MCF 10A (cell line): ENCODE measurements at regions of chr2 and their contacts with region 1.

Region 1: GRCh38 chr2:237572021-237572741 is 5.8 kb downstream of the PRLH start:
- DNase-seq: peak; percentile 82
- H3K4me3 Mint-ChIP-seq: peak overlapping the region; percentile 35
- H3K27ac Mint-ChIP-seq: peak overlapping the region; percentile 16
- H3K4me1 Mint-ChIP-seq: peaks cover 17% of the 10 kb centered on the region
- H3K27me3 Mint-ChIP-seq: no peaks in the 10 kb centered on the region
- CTCF ChIP-seq: peak; percentile 97

Region 2: GRCh38 chr2:237092920-237093781 is 479.0 kb before region 1 on chr2:
- CTCF ChIA-PET with region 1: interaction called, 7 read pairs
- POLR2A ChIA-PET with region 1: interaction called, 4 read pairs
- intact Hi-C with region 1: loop called (anchors 1 kb)
- DNase-seq: peak; percentile 86
- H3K4me3 Mint-ChIP-seq: peak overlapping the region; percentile 99
- H3K27ac Mint-ChIP-seq: peak overlapping the region; percentile 94
- H3K4me1 Mint-ChIP-seq: peaks cover 62% of the 10 kb centered on the region
- H3K27me3 Mint-ChIP-seq: no peaks in the 10 kb centered on the region
- CTCF ChIP-seq: peak; percentile 72

Region 3: GRCh38 chr2:237413777-237414661 is 158.2 kb before region 1 on chr2 and contains the start of gene COL6A3:
- CTCF ChIA-PET with region 1: interaction called, 6 read pairs
- POLR2A ChIA-PET with region 1: interaction called, 5 read pairs
- intact Hi-C with region 1: loop called (anchors 5 kb)
- DNase-seq: no peak
- H3K4me3 Mint-ChIP-seq: no peak within 1 kb of the TSS
- H3K27ac Mint-ChIP-seq: no peak within 1 kb of the TSS
- H3K4me1 Mint-ChIP-seq: no peaks in the 10 kb centered on the region
- H3K27me3 Mint-ChIP-seq: no peaks in the 10 kb centered on the region
- CTCF ChIP-seq: no peak
- total RNA-seq, gene COL6A3: 0.19 and 0.61 TPM in 2 replicates

Region 4: GRCh38 chr2:237488901-237489801 is 83.0 kb before region 1 on chr2:
- CTCF ChIA-PET with region 1: interaction called, 11 read pairs
- POLR2A ChIA-PET with region 1: interaction called, 3 read pairs
- intact Hi-C with region 1: no loop called
- DNase-seq: peak; percentile 77
- H3K4me3 Mint-ChIP-seq: peak overlapping the region; percentile 29
- H3K27ac Mint-ChIP-seq: peak overlapping the region; percentile 90
- H3K4me1 Mint-ChIP-seq: peaks cover 19% of the 10 kb centered on the region
- H3K27me3 Mint-ChIP-seq: no peaks in the 10 kb centered on the region
- CTCF ChIP-seq: no peak

Region 5: DNA sequence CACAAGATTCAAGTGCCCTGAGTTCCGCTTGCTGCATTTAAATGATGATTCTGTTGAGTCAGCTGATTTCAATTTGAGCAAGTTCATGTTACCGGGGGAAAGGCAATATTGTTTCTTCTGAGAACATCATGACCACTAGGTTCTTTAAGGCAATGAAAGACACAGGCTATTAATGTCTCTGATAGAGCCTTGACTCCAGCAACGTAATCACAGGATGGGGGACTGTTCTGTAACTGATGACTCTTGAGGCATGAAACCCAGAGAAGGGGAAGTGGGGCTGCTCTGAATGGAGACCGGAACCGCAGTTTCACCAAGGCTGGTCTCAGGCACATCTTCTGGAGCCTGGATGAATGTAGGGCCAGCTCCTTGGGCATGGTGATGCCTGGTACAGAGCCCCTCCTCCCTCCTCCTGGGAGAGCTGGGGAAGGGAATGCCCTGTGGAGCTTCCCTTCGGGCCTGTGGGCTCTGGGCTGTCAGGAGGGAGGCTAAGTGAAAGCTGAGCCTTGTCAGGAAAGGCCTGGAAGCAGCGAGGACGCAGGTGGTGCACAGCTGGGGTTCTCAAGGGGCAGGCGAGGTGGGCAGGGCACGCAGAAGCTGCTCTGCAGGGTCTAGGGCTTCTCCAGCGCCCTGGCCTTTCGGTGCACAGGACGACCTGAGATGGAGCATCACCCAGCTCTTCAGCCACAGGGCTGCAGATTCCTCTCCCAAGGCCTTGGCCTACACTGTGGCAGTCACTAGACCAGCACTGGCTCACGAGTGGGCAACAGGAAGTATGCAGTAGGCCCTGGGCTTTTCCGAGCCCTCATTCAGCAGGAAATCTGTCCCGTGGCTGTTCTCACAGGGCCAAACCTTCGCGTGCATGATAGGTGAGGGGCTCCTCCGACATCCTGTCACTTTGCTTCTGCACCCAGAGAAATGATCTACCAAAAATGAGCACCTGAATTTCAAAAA is 42.5 kb before region 1 on chr2:
- CTCF ChIA-PET with region 1: interaction called, 17 read pairs
- POLR2A ChIA-PET with region 1: no interaction called
- intact Hi-C with region 1: no loop called
- DNase-seq: no peak
- H3K4me3 Mint-ChIP-seq: no peak overlapping the region
- H3K27ac Mint-ChIP-seq: no peak overlapping the region
- H3K4me1 Mint-ChIP-seq: no peaks in the 10 kb centered on the region
- H3K27me3 Mint-ChIP-seq: no peaks in the 10 kb centered on the region
- CTCF ChIP-seq: no peak

Region 6: GRCh38 chr2:237590272-237591140 is 18.3 kb after region 1 on chr2 and contains the start of gene RAB17:
- CTCF ChIA-PET with region 1: interaction called, 18 read pairs
- POLR2A ChIA-PET with region 1: interaction called, 13 read pairs
- intact Hi-C with region 1: no loop called
- DNase-seq: peak; percentile 71
- H3K4me3 Mint-ChIP-seq: peak within 1 kb of the TSS; percentile 77
- H3K27ac Mint-ChIP-seq: peak within 1 kb of the TSS; percentile 90
- H3K4me1 Mint-ChIP-seq: peaks cover 13% of the 10 kb centered on the region
- H3K27me3 Mint-ChIP-seq: no peaks in the 10 kb centered on the region
- CTCF ChIP-seq: no peak
- total RNA-seq, gene RAB17: 10.6 and 17.2 TPM in 2 replicates

Region 7: DNA sequence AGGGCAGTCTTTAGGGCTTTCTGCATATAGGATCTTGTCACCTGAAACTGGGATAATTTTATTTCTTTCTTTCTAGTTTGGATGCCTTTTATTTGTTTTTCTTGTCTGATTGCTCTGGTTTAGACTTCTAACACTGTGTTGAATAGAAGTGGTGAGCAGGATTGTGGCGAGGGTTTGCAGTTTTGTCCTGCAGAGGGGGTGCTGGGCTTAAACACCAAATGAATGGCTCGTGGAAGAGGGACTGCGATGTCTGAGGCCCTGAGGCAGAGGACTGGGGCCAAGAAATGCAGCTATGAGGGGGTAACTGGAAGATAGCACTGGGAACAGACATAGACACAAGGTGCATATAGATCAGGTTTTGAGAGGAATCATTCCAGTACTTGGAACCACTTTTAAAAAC is 415.1 kb after region 1 on chr2:
- CTCF ChIA-PET with region 1: no interaction called
- POLR2A ChIA-PET with region 1: no interaction called
- intact Hi-C with region 1: no loop called
- DNase-seq: no peak
- H3K4me3 Mint-ChIP-seq: no peak overlapping the region
- H3K27ac Mint-ChIP-seq: no peak overlapping the region
- H3K4me1 Mint-ChIP-seq: peaks cover 11% of the 10 kb centered on the region
- H3K27me3 Mint-ChIP-seq: no peaks in the 10 kb centered on the region
- CTCF ChIP-seq: no peak

Region 8: GRCh38 chr2:237997521-237997920 is 425.3 kb after region 1 on chr2:
- CTCF ChIA-PET with region 1: no interaction called
- POLR2A ChIA-PET with region 1: no interaction called
- intact Hi-C with region 1: no loop called
- DNase-seq: no peak
- H3K4me3 Mint-ChIP-seq: no peak overlapping the region
- H3K27ac Mint-ChIP-seq: peak overlapping the region; percentile 46
- H3K4me1 Mint-ChIP-seq: peaks cover 6% of the 10 kb centered on the region
- H3K27me3 Mint-ChIP-seq: no peaks in the 10 kb centered on the region
- CTCF ChIP-seq: no peak